Caco-2 (cell line): ENCODE measurements at regions of chrX and their contacts with region 1.

Region 1: GRCh38 chrX:68710870-68711576 is 63.6 kb downstream of the STARD8 start:
- DNase-seq: peak; percentile 62 to 63
- H3K4me3 ChIP-seq: no peak overlapping the region
- H3K4me3 Mint-ChIP-seq: no peak overlapping the region
- H3K27ac Mint-ChIP-seq: no peak overlapping the region
- H3K4me1 ChIP-seq: no peaks in the 10 kb centered on the region
- H3K4me1 Mint-ChIP-seq: peaks cover 7% of the 10 kb centered on the region
- H3K27me3 ChIP-seq: no peaks in the 10 kb centered on the region
- H3K27me3 Mint-ChIP-seq: peaks cover 5% of the 10 kb centered on the region
- CTCF ChIP-seq: peak; percentile 63 to 72

Region 2: DNA sequence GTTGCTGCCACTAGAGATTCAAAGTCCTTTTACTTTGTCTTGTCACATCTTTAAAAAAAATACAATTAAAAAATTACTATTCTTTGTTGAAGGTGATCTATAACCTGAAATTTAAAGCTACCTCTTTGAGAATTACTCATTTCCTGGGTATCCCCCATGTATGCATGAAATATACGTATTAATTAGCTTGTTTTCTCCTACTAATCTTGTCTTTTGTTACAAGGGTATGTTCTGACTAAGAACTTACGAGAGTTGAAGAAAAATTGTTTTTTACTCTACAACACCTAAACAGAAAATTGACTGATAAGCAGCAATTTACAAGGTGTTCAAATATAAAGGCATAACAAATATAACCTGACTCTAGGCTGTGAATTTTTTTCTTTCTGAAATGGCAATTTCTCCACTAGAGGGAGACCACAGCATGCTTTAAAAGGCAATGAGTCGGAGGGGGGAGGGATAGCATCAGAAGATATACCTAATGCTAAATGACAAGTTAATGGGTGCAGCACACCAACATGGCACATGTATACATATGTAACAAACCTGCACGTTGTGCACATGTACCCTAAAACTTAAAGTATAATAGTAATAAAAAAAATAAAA is 527.3 kb before region 1 on chrX:
- CTCF ChIA-PET with region 1: interaction called, 4 read pairs
- POLR2A ChIA-PET with region 1: no interaction called
- intact Hi-C with region 1: loop called (anchors 2 kb)
- DNase-seq: peak in 1 of 2 experiments; percentile 30
- H3K4me3 ChIP-seq: no peak overlapping the region
- H3K4me3 Mint-ChIP-seq: no peak overlapping the region
- H3K27ac Mint-ChIP-seq: no peak overlapping the region
- H3K4me1 ChIP-seq: no peaks in the 10 kb centered on the region; the same call in 1 of the 2 replicates
- H3K4me1 Mint-ChIP-seq: peaks cover 7% of the 10 kb centered on the region
- H3K27me3 ChIP-seq: no peaks in the 10 kb centered on the region
- H3K27me3 Mint-ChIP-seq: no peaks in the 10 kb centered on the region
- CTCF ChIP-seq: peak; percentile 36 to 49

Region 3: DNA sequence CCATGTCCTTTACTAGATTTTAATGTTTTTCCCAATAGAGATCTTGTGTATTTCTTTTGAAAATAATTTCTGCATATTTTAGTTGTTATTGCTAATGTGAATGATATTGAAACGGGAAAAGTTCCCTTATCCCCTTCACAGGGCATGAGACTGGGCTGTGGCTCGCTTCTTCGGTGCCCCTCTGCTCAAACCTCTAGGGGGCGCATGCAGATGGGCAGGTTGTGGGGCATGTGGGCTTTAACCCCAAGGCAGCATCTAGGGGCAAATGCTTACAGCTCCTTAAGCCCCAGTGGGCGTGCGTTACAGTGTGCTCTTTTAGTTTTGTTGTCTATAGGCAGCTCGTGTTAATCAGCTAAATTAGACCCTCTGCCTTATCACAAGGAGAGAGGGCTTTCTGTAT is 472.5 kb before region 1 on chrX:
- CTCF ChIA-PET with region 1: no interaction called
- POLR2A ChIA-PET with region 1: no interaction called
- intact Hi-C with region 1: loop called (anchors 1 kb)
- DNase-seq: peak in 1 of 2 experiments; percentile 30
- H3K4me3 ChIP-seq: no peak overlapping the region
- H3K4me3 Mint-ChIP-seq: no peak overlapping the region
- H3K27ac Mint-ChIP-seq: no peak overlapping the region
- H3K4me1 ChIP-seq: no peaks in the 10 kb centered on the region
- H3K4me1 Mint-ChIP-seq: no peaks in the 10 kb centered on the region
- H3K27me3 ChIP-seq: no peaks in the 10 kb centered on the region
- H3K27me3 Mint-ChIP-seq: no peaks in the 10 kb centered on the region
- CTCF ChIP-seq: peak; percentile 31 to 43

Region 4: GRCh38 chrX:68511255-68511654 is 199.8 kb before region 1 on chrX:
- CTCF ChIA-PET with region 1: interaction called, 5 read pairs
- POLR2A ChIA-PET with region 1: no interaction called
- intact Hi-C with region 1: loop called (anchors 1 kb)
- DNase-seq: peak in 1 of 2 experiments; percentile 55
- H3K4me3 ChIP-seq: no peak overlapping the region
- H3K4me3 Mint-ChIP-seq: no peak overlapping the region
- H3K27ac Mint-ChIP-seq: no peak overlapping the region
- H3K4me1 ChIP-seq: no peaks in the 10 kb centered on the region
- H3K4me1 Mint-ChIP-seq: peaks cover 7% of the 10 kb centered on the region
- H3K27me3 ChIP-seq: no peaks in the 10 kb centered on the region
- H3K27me3 Mint-ChIP-seq: no peaks in the 10 kb centered on the region
- CTCF ChIP-seq: peak; percentile 63 to 66

Region 5: GRCh38 chrX:68684291-68684918 is 26.6 kb before region 1 on chrX:
- CTCF ChIA-PET with region 1: no interaction called
- POLR2A ChIA-PET with region 1: no interaction called
- intact Hi-C with region 1: no loop called
- DNase-seq: no peak
- H3K4me3 ChIP-seq: no peak overlapping the region
- H3K4me3 Mint-ChIP-seq: no peak overlapping the region
- H3K27ac Mint-ChIP-seq: no peak overlapping the region
- H3K4me1 ChIP-seq: no peaks in the 10 kb centered on the region
- H3K4me1 Mint-ChIP-seq: no peaks in the 10 kb centered on the region
- H3K27me3 ChIP-seq: no peaks in the 10 kb centered on the region
- H3K27me3 Mint-ChIP-seq: no peaks in the 10 kb centered on the region
- CTCF ChIP-seq: no peak

Region 6: DNA sequence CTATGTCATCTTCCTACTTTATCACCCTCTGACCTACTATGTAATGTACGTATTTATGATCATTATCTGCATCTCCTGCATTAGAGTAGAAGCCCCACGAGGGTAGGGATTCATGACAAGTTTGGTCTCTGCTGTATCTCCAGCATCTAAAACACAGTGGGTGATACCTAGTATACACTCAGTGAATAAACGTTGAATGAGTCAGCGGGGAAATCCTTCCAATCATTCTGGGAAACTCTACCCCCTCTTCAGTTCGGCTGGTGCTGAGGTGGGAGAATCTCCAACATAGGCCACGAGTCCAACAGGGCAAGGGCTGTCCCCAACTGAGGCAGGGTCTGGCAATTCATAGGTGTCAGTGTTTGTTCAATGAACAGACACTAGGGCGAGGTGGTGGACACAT is 43.4 kb after region 1 on chrX:
- CTCF ChIA-PET with region 1: no interaction called
- POLR2A ChIA-PET with region 1: no interaction called
- intact Hi-C with region 1: no loop called
- DNase-seq: no peak
- H3K4me3 ChIP-seq: no peak overlapping the region
- H3K4me3 Mint-ChIP-seq: no peak overlapping the region
- H3K27ac Mint-ChIP-seq: no peak overlapping the region
- H3K4me1 ChIP-seq: no peaks in the 10 kb centered on the region
- H3K4me1 Mint-ChIP-seq: no peaks in the 10 kb centered on the region
- H3K27me3 ChIP-seq: no peaks in the 10 kb centered on the region
- H3K27me3 Mint-ChIP-seq: peaks cover 3% of the 10 kb centered on the region
- CTCF ChIP-seq: no peak

Region 7: GRCh38 chrX:68828740-68829552 is 117.9 kb after region 1 on chrX and contains the start of gene EFNB1:
- CTCF ChIA-PET with region 1: no interaction called
- POLR2A ChIA-PET with region 1: no interaction called
- intact Hi-C with region 1: no loop called
- DNase-seq: peak; percentile 89 to 92
- H3K4me3 ChIP-seq: peak within 1 kb of the TSS; percentile 70
- H3K4me3 Mint-ChIP-seq: peak within 1 kb of the TSS; percentile 83
- H3K27ac Mint-ChIP-seq: no peak within 1 kb of the TSS
- H3K4me1 ChIP-seq: no peaks in the 10 kb centered on the region
- H3K4me1 Mint-ChIP-seq: no peaks in the 10 kb centered on the region
- H3K27me3 ChIP-seq: no peaks in the 10 kb centered on the region
- H3K27me3 Mint-ChIP-seq: no peaks in the 10 kb centered on the region
- CTCF ChIP-seq: no peak
- total RNA-seq, gene EFNB1: 5.7 and 7.0 TPM in 2 replicates